ENCODE measurements at regions of chr2 and their contacts with region 1.

Region 1: GRCh38 chr2:40470822-40471813 is 19.2 kb upstream of the SLC8A1 start:
- DNase-seq: no peak
- CTCF ChIP-seq: no peak

Region 2: DNA sequence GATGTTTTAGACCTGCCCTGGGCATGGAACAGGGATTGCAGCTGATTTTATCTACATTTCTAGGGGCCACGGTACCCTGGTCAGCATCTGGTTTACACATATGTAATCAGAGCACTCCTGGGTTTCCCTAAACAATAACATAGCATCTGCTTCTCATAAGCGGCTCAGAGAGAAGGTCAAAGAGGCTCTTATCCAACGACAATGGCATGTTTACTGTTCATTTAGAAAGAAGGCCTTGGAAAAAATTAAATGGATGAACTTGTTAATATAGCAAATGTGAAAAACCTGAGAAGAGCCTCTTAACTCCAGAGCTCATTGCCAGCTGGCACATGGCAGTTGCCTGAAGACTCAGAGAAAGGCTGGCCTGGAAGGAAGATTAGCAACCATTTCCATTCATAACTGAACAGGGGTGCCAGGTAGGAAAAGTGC is 489.2 kb before region 1 on chr2:
- CTCF ChIA-PET with region 1: no interaction called
- POLR2A ChIA-PET with region 1: no interaction called
- DNase-seq: no peak
- CTCF ChIP-seq: no peak

Region 3: GRCh38 chr2:40483549-40484243 is 12.6 kb after region 1 on chr2:
- CTCF ChIA-PET with region 1: interaction called, 10 read pairs
- POLR2A ChIA-PET with region 1: no interaction called
- DNase-seq: no peak
- CTCF ChIP-seq: no peak

Measured in GM10248 (cell line).